GM13976 (cell line): ENCODE measurements at regions of chr15 and their contacts with region 1.

Region 1: GRCh38 chr15:81400640-81401236 is 26.7 kb upstream of the TMC3 start:
- DNase-seq: peak; percentile 44
- CTCF ChIP-seq: peak; percentile 44

Region 2: DNA sequence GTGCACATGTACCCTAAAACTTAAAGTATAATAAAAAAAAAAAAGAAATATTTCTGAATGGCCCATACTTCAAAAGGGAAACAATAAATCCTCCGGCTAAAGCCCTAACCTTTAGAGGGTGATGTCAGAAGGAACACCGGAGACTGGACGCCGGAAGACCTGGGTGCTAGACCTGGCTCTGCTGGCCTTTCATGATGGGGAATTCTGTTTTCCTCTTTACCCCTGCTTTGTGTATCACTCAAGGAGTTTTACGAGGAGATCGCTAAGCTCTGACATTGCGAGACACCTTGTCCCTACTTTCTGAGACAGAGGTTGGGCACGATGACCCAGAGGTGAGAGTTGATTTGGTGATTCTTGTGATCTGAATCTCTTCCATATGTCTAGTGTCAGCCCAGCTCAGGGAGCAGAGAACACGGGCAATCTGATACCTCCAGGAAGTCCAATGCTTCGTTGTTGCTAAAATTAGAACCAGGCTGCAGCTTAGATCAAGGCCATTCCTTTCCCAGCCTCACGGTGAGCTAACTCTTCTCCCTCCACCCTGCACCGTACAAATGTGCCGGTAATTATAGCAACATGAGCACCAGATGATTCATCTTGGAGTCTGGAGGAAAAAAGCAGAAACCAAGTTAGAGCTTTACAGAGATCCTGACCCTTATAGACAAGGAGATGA is 308.7 kb before region 1 on chr15:
- in situ Hi-C with region 1: no loop called
- DNase-seq: no peak
- CTCF ChIP-seq: no peak

Region 3: DNA sequence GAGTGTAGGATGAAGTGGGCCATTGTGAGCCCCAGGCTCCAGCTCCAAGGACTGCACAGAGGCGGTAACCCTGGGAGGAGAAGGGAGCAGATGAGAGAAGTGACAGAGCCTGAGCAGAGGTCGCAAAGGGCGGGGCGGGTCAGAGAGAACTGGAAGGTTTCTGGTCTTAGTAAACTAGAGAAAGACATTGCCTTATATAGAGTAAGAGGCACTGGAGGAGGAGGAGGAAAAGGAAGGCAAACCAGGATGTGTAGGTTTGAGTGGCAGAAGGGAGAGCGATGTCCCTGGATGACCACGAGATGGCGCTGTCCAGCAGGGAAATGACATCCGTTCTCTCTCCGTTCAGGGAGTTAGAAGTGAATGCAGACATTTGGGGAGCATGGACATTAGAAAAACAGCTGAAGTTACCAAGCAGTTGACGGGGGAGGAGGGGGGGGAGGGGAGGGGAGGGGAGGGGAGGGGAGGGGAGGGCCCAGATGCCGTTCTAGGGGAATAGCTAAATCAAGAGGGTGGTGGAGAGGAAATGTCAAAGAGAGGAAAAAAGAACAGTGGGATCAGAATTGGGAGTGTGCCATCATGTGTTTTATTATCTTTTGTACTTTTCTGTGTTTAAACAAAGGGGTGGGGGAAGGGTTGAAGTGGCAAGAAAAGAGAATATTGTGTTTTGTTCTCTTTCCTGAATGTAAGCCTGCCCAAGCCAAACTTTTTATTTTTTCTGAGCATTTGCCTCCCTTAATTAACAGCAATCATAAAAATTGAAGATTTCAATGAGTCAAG is 125.6 kb before region 1 on chr15:
- in situ Hi-C with region 1: loop called (anchors 5 kb)
- DNase-seq: peak; percentile 79
- CTCF ChIP-seq: peak; percentile 89